CD4-positive, alpha-beta T cell (primary cell): ENCODE measurements at regions of chr22 and their contacts with region 1.

Region 1: DNA sequence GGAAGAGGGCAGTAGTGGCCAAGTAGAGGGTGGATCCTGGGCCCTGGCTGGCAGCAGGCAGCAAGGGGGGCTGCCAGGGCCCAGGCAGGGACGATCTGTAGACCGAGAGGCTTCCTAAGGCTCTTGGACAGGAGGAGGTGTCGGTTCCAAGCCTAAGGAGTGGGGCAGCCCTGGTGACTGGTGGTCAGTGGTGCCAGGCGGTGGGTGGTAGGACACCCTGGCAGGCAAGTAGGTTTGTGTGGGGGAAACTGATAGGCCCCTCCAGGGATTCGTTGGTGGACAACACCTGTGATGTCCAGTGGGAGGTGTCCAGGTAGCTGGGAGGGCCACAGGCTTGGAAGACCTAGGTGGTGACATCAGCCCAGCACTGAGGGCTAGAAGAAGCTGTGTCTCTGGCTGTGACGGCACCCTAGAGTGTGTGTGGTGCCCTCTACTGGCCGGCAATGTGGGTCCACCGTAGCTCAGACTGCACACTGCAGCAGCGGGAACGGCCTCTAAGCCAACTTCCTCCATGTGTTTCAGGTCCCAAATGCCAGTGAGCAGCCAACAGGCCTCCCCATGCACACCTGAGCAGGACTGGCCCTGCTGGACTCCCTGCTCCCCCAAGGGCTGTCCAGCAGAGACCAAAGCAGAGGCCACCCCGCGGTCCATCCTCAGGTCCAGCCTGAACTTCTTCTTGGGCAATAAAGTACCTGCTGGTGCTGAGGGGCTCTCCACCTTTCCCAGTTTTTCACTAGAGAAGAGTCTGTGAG is 9.4 kb upstream of the SAMM50 start:
- DNase-seq: peak; percentile 44 to 81 (median 56)
- ATAC-seq: peak; percentile 97
- H3K4me3 ChIP-seq: no peak overlapping the region
- H3K4me3 Mint-ChIP-seq: no peak overlapping the region
- H3K27ac ChIP-seq: no peak overlapping the region
- H3K27ac Mint-ChIP-seq: no peak overlapping the region
- H3K4me1 ChIP-seq: peaks cover 7% of the 10 kb centered on the region
- H3K4me1 Mint-ChIP-seq: no peaks in the 10 kb centered on the region
- H3K27me3 ChIP-seq: peaks cover 0 to 4% of the 10 kb centered on the region in 2 experiments
- H3K27me3 Mint-ChIP-seq: peaks cover 12% of the 10 kb centered on the region
- CTCF ChIP-seq: peak; percentile 68

Region 2: GRCh38 chr22:43884600-43885325 is 61.0 kb before region 1 on chr22:
- CTCF ChIA-PET with region 1: interaction called, 13 read pairs
- POLR2A ChIA-PET with region 1: no interaction called
- intact Hi-C with region 1: no loop called
- DNase-seq: peak in 12 of 14 experiments; percentile 10 to 54 (median 28)
- ATAC-seq: no peak
- H3K4me3 ChIP-seq: no peak overlapping the region
- H3K4me3 Mint-ChIP-seq: no peak overlapping the region
- H3K27ac ChIP-seq: no peak overlapping the region
- H3K27ac Mint-ChIP-seq: no peak overlapping the region
- H3K4me1 ChIP-seq: peaks cover 3% of the 10 kb centered on the region
- H3K4me1 Mint-ChIP-seq: no peaks in the 10 kb centered on the region
- H3K27me3 ChIP-seq: peaks cover 14 to 21% of the 10 kb centered on the region in 2 experiments
- H3K27me3 Mint-ChIP-seq: peaks cover 32% of the 10 kb centered on the region
- CTCF ChIP-seq: peak; percentile 62